ENCODE measurements at regions of chr7 and their contacts with region 1.

Region 1: DNA sequence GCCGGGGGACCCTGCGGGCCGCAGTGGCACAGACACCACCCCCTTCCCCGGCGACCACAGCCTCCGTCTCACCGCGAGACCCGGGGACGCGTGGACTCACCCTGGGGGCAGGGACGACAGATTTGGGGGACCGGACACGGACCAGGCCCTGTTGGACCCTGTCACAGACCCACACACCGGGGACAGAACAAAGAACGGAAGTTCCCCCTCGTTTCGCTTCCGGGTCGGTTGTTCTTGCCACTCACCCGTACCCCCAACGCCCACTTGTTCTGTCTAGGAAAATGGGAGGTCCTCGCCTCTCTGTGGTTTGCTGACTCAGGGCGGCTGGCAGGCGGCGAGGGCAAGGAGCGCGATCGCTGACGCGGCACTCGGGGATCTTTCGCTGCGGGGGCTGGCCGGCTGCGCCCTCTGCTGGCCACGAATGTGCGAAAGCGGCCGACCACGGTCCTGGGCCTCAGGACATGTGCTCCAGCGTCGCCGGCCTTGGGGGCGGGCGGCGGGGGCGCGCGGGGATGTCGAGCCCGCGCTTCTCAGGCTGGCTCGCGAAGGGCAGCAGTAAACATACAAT is at the start of gene ZNF3:
- DNase-seq: peak; percentile 99
- H3K4me3 Mint-ChIP-seq: peak within 1 kb of the TSS; percentile 84
- H3K27ac Mint-ChIP-seq: peak within 1 kb of the TSS; percentile 74
- H3K4me1 Mint-ChIP-seq: peaks cover 6% of the 10 kb centered on the region
- H3K27me3 Mint-ChIP-seq: no peaks in the 10 kb centered on the region
- CTCF ChIP-seq: peak; percentile 82
- total RNA-seq, gene ZNF3: 23.7 and 24.8 TPM in 2 replicates

Region 2: GRCh38 chr7:100015232-100016209 is 66.1 kb before region 1 on chr7 and contains the start of gene ZKSCAN1:
- CTCF ChIA-PET with region 1: interaction called, 3 read pairs
- POLR2A ChIA-PET with region 1: interaction called, 14 read pairs
- intact Hi-C with region 1: no loop called
- DNase-seq: peak; percentile 95
- H3K4me3 Mint-ChIP-seq: peak within 1 kb of the TSS; percentile 80
- H3K27ac Mint-ChIP-seq: peak within 1 kb of the TSS; percentile 76
- H3K4me1 Mint-ChIP-seq: peaks cover 12% of the 10 kb centered on the region
- H3K27me3 Mint-ChIP-seq: no peaks in the 10 kb centered on the region
- CTCF ChIP-seq: no peak
- total RNA-seq, gene ZKSCAN1: 80.2 and 86.2 TPM in 2 replicates

Region 3: GRCh38 chr7:100066953-100067352 is 14.7 kb before region 1 on chr7:
- CTCF ChIA-PET with region 1: interaction called, 3 read pairs
- POLR2A ChIA-PET with region 1: interaction called, 12 read pairs
- intact Hi-C with region 1: no loop called
- DNase-seq: no peak
- H3K4me3 Mint-ChIP-seq: no peak overlapping the region
- H3K27ac Mint-ChIP-seq: no peak overlapping the region
- H3K4me1 Mint-ChIP-seq: no peaks in the 10 kb centered on the region
- H3K27me3 Mint-ChIP-seq: no peaks in the 10 kb centered on the region
- CTCF ChIP-seq: no peak